ENCODE measurements at regions of chr1 and their contacts with region 1.

Region 1: DNA sequence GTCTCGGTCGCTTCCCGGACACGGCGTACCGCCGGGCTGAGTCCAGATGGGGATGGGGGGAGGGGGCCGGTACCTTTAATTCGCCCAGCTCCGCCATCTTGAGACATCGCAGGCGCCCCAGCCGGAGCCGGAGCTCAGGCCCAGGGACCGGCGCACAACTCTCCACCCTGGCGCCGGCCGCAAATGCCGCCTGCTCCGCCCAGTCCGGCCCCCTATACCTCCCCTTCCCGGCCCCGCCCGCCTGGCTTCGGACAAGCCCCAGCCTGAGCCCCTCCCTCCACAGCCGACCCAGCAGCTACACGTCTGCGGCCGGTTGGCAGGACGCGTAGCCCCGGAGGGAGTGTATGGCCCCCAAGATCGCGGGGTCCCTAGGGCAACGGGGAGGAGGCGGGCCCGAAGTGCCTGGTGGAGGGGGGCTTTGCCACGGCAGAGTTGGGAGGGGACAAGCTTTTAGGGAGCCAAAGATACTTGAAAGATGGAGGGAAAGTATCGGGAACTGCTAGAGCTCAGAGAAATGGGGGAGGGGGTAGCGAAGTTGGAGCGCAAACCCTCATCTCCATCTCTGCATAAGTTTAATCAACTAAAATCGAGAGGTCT is at the start of gene PIAS3:
- DNase-seq: peak; percentile 93
- H3K4me3 Mint-ChIP-seq: peak within 1 kb of the TSS; percentile 90
- H3K27ac Mint-ChIP-seq: peak within 1 kb of the TSS; percentile 76
- H3K4me1 Mint-ChIP-seq: peaks cover 15% of the 10 kb centered on the region
- H3K27me3 Mint-ChIP-seq: no peaks in the 10 kb centered on the region
- total RNA-seq, gene PIAS3: 17.8 to 17.9 TPM

Region 2: DNA sequence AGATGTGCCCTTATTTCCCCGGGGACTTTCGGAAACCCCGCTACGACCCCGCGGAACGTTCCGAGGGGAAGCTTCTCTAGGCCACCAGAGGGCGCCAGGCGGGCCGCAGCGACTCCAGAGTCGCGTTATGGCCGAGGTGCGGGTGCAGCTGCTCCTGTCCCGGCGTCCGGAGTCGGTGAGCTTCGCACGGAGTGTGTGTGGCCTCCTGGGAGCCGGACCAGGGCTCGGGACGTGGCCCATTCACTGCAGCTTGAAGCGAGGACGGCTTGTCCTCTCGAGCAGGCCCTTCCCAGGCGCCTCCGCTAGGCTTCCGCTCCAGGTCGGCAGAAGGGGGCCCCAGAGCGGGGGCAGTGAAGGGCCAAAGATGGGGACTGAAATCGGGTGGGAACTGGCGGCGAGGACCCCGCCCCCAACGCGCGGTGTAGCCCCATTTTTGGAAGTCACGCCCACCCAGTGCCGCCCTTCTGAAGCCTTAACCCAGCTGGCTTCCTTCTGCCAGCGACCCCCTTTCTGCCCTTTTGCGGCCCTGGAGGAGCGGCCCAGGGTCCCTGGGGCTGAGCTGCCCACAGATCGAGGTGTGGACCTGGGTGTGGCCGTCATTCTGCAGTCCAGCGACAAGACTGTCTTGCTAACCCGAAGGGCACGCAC is 13.4 kb before region 1 on chr1 and contains the start of gene NUDT17:
- CTCF ChIA-PET with region 1: interaction called, 158 read pairs
- POLR2A ChIA-PET with region 1: interaction called, 19 read pairs
- intact Hi-C with region 1: no loop called
- DNase-seq: peak; percentile 80
- H3K4me3 Mint-ChIP-seq: no peak within 1 kb of the TSS
- H3K27ac Mint-ChIP-seq: peak within 1 kb of the TSS; percentile 12
- H3K4me1 Mint-ChIP-seq: peaks cover 11% of the 10 kb centered on the region
- H3K27me3 Mint-ChIP-seq: no peaks in the 10 kb centered on the region
- total RNA-seq, gene NUDT17: 2.8 to 3.8 TPM

Region 3: DNA sequence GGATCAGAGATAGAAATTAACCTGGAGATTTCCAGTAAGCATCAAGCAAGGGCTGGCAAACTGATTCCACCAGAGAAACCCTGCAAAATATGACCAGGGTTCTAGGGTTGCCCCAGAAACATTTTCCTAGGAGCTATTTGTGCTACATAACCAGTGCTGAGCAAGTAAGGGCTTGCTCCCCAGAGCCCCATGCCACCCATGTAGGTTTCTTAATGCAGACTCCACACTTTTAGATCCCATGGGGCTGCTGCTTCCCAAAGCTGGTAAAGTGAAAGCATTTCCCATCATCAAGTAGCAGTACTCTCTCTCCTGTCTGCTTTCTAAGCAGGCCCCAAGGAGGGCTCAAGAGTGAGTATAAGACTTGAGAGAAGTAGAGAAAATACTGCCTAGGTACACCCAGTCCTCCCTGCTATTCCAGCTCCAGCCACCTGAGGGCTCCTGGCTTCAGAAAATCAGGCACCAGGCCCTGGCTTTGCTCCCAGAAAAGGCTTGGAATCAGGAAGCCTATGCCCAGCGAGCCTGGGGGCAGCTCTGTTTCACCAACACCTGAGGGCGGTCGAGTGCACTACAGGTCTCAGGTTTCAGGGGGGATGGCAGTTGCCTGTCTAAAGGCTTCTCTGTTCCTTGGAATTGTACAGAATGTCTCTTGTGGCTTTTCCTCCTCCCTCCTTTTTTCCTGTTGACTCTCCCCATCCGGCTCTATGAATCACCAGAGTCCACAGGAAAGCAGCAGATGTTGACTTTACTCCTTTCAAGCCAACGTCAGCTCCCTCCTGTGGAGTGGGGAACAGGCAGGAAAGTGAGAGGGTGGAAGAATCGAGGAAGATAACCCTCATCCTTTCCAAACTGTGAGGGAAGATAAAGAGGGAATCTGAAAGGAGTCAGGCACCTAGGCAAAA is 32.8 kb after region 1 on chr1:
- CTCF ChIA-PET with region 1: interaction called, 21 read pairs
- POLR2A ChIA-PET with region 1: interaction called, 4 read pairs
- intact Hi-C with region 1: no loop called
- DNase-seq: peak; percentile 74
- H3K4me3 Mint-ChIP-seq: no peak overlapping the region
- H3K27ac Mint-ChIP-seq: no peak overlapping the region
- H3K4me1 Mint-ChIP-seq: peaks cover 1% of the 10 kb centered on the region
- H3K27me3 Mint-ChIP-seq: no peaks in the 10 kb centered on the region

Region 4: DNA sequence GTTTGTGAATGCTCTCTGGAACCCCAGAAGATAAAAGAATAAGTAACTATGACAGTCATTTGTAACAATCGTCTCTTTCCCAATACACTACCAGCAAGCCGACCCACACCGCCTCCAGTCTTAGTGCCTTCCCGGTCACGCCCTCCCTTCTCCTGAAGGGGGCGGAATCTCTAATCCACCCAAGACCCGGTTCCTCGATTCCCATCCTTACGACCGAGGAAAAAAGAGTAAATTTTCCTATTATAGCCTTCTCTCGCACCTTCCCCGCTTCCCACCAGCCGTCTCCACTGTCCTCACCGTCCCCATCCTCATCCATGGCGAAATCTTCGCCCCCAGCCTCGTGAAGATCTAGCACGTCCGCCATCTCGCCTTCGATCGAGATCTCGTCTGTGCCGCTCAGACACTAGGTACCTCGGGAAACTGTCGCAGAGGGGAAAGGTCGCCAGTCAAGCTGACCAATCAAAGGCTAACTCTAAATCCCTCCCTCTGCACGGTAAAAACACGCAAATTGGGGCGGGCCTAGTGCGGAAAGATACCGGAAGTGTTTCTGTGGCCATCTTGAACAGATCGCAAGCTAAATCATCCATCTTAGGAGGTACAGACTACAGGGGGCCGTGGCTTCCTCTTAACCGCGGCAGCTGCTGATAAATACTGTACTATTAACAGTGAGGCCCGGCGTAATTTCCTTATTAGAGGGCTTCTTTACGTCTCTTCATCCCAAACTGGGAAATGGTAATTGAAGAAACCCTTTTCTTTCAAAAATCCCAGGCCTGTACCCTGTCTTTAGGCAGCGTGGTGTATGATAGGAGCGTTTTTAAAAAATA is 68.3 kb after region 1 on chr1 and contains the start of gene RBM8A:
- CTCF ChIA-PET with region 1: interaction called, 4 read pairs
- POLR2A ChIA-PET with region 1: interaction called, 26 read pairs
- intact Hi-C with region 1: loop called (anchors 2 kb)
- DNase-seq: peak; percentile 97
- H3K4me3 Mint-ChIP-seq: no peak within 1 kb of the TSS
- H3K27ac Mint-ChIP-seq: no peak within 1 kb of the TSS
- H3K4me1 Mint-ChIP-seq: peaks cover 25% of the 10 kb centered on the region
- H3K27me3 Mint-ChIP-seq: no peaks in the 10 kb centered on the region
- total RNA-seq, gene RBM8A: 275 to 277 TPM

Region 5: GRCh38 chr1:145978854-145979759 is 120.1 kb after region 1 on chr1:
- CTCF ChIA-PET with region 1: interaction called, 4 read pairs
- POLR2A ChIA-PET with region 1: interaction called, 3 read pairs
- intact Hi-C with region 1: loop called (anchors 5 kb)
- DNase-seq: peak; percentile 92
- H3K4me3 Mint-ChIP-seq: no peak overlapping the region
- H3K27ac Mint-ChIP-seq: no peak overlapping the region
- H3K4me1 Mint-ChIP-seq: peaks cover 3% of the 10 kb centered on the region
- H3K27me3 Mint-ChIP-seq: no peaks in the 10 kb centered on the region